ENCODE measurements at regions of chr15 and their contacts with region 1.

Region 1: DNA sequence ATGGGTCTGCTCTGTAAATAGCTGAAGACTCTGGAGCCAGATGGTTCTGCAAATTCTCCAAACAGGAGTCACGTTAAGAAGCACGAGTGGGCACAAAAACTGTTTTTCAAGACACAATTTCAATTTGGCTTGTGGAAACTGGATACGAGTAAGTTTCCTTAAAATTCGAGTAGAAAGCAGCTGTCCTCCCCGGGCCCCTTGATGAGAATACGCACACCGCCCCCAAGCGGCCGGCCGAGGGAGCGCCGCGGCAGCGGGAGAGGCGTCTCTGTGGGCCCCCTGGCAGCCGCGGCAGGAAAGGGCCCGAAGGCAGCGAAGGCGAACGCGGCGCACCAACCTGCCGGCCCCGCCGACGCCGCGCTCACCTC is 778 bp upstream of the THBS1 start:
- DNase-seq: peak; percentile 91
- H3K4me3 Mint-ChIP-seq: peak overlapping the region; percentile 55
- H3K27ac Mint-ChIP-seq: no peak overlapping the region
- H3K4me1 Mint-ChIP-seq: peaks cover 14% of the 10 kb centered on the region
- H3K27me3 Mint-ChIP-seq: peaks cover 49% of the 10 kb centered on the region

Region 2: DNA sequence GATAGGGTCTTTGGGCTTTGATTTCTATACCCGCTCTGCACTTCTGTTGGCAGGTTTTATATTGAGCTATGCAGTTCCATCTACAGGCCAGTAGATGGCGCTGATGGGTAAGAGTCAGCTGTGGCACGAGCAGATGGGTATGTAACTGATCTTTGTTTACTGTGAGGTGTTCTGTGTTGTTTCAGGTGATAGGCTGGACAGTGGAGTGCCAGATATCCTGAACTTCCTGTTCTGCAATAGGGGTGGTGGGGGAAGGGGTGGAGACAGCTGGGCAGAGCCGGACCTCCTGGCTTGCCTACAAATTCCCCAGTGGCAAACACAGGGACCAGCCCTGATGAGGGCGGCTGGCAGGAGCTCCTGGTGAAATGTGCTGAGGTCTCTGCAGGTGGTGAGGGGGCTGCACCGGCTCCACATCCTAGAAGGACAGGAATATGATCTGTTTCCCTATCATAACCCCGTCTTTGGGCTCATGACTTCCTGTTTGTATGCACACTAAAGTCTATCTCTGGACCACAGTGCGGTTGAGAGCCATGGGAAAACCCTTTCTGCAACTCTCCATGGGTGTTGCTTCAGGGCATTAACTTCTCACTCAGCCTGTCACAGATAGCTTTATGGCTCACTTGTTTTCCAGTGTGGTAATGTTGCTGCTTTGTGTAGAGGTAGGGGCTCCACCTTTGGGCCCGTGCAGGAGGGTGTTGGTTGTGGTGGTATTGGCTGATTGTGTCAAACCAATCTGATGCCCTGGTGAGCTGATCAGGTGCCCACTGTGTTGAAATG is 1139.6 kb before region 1 on chr15:
- CTCF ChIA-PET with region 1: interaction called, 14 read pairs
- POLR2A ChIA-PET with region 1: no interaction called
- intact Hi-C with region 1: no loop called
- DNase-seq: peak; percentile 60
- H3K4me3 Mint-ChIP-seq: no peak overlapping the region
- H3K27ac Mint-ChIP-seq: peak overlapping the region; percentile 6
- H3K4me1 Mint-ChIP-seq: peaks cover 5% of the 10 kb centered on the region
- H3K27me3 Mint-ChIP-seq: peaks cover 11% of the 10 kb centered on the region

Region 3: DNA sequence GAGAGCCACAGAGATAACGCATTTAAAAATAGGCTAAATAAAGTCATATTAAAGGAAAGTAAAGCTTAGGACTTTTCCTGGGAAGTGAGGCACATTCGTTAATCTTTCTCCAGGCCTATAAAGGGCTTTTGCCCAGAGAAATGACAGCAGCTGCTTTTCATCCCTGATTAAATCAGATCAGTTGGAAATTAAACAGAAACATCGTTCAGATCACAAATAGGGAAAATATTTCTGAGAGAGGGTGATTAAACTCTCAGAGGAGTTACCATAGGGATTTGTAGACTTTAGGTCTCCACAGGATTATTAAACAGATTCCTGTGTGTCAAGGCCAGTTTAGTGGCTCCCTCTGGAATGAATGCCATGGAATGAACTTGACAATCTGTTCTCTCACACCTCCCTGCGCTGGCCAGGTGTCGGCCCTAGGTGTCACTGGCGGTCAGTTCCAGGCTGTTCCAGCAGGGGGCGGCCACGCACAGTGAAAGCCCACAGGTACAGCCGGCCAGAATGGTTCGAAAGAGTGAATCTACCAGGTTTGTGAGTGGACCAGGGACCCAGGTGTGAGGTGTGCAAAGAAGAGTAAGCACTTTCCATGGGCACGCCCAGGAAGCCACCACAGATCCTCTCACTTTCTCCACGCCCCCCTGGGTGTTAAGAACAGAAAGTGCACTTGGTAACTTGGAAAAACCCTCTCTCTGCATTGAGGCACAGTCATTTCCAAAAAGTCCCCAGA is 762.5 kb before region 1 on chr15:
- CTCF ChIA-PET with region 1: interaction called, 7 read pairs
- POLR2A ChIA-PET with region 1: no interaction called
- intact Hi-C with region 1: loop called (anchors 1 kb)
- DNase-seq: peak; percentile 89
- H3K4me3 Mint-ChIP-seq: no peak overlapping the region
- H3K27ac Mint-ChIP-seq: no peak overlapping the region
- H3K4me1 Mint-ChIP-seq: peaks cover 5% of the 10 kb centered on the region
- H3K27me3 Mint-ChIP-seq: peaks cover 3% of the 10 kb centered on the region

Region 4: DNA sequence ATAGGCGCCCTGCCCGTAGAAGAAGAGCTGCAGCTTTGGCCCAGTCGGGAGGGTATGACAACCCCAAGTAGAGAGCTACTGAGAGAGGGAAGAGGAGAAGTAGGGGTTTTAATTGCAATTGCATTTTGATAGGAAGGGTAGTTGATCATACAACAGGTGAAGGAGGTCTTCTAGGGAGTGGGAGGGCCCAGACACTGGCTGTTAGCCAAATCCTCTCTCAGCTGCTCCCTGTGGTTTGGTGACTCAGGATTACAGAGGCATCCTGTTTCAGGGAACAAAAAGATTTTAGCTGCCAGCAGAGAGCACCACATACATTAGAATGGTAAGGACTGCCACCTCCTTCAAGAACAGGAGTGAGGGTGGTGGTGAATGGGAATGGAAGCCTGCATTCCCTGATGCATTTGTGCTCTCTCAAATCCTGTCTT is 408.1 kb before region 1 on chr15:
- CTCF ChIA-PET with region 1: interaction called, 7 read pairs
- POLR2A ChIA-PET with region 1: no interaction called
- intact Hi-C with region 1: loop called (anchors 1 kb)
- DNase-seq: peak; percentile 48
- H3K4me3 Mint-ChIP-seq: no peak overlapping the region
- H3K27ac Mint-ChIP-seq: no peak overlapping the region
- H3K4me1 Mint-ChIP-seq: no peaks in the 10 kb centered on the region
- H3K27me3 Mint-ChIP-seq: peaks cover 19% of the 10 kb centered on the region

Region 5: GRCh38 chr15:39426552-39427532 is 153.3 kb before region 1 on chr15:
- CTCF ChIA-PET with region 1: interaction called, 4 read pairs
- POLR2A ChIA-PET with region 1: no interaction called
- intact Hi-C with region 1: loop called (anchors 5 kb)
- DNase-seq: peak; percentile 90
- H3K4me3 Mint-ChIP-seq: peak overlapping the region; percentile 13
- H3K27ac Mint-ChIP-seq: peak overlapping the region; percentile 34
- H3K4me1 Mint-ChIP-seq: peaks cover 27% of the 10 kb centered on the region
- H3K27me3 Mint-ChIP-seq: peaks cover 30% of the 10 kb centered on the region

Region 6: GRCh38 chr15:39624806-39625205 is 44.7 kb after region 1 on chr15:
- CTCF ChIA-PET with region 1: interaction called, 20 read pairs
- POLR2A ChIA-PET with region 1: no interaction called
- intact Hi-C with region 1: loop called (anchors 2 kb)
- DNase-seq: peak; percentile 83
- H3K4me3 Mint-ChIP-seq: peak overlapping the region; percentile 65
- H3K27ac Mint-ChIP-seq: peak overlapping the region; percentile 96
- H3K4me1 Mint-ChIP-seq: peaks cover 75% of the 10 kb centered on the region
- H3K27me3 Mint-ChIP-seq: no peaks in the 10 kb centered on the region

Region 7: DNA sequence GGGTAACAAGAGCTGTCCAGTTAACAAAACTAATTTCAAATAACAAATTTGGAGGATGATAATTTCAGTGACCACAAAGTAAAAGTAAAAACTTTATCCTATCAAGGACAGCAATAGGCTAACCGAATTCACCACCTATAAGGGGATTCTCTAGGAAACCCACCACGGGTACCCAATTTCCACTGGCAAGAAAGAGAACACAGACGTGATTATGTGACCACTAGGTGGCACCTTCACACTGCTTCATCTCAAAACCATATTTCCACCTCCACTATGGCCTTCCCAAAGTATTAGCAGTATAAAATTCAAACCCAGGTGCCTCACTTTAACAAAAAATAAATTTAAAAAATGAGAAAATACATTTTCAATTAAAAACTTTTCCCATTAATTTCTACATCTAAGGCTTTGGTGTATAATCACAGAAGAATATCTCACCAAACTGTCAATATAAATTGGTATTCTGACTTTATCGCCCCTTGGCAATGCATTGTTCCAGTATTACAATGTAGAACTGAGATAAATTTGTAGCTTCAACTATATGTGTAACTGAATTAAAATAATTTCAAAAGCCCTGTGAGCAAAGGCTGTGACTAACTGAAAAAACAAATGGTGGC is 106.0 kb after region 1 on chr15:
- CTCF ChIA-PET with region 1: interaction called, 5 read pairs
- POLR2A ChIA-PET with region 1: no interaction called
- intact Hi-C with region 1: loop called (anchors 2 kb)
- DNase-seq: peak; percentile 28
- H3K4me3 Mint-ChIP-seq: no peak overlapping the region
- H3K27ac Mint-ChIP-seq: no peak overlapping the region
- H3K4me1 Mint-ChIP-seq: no peaks in the 10 kb centered on the region
- H3K27me3 Mint-ChIP-seq: peaks cover 2% of the 10 kb centered on the region

Measured in activated CD4-positive, alpha-beta memory T cell treated with anti-CD3 and anti-CD28 coated beads for 36 hours (primary cell).